Common myeloid progenitor, CD34-positive (primary cell): ENCODE measurements at regions of chr3 and their contacts with region 1.

Region 1: DNA sequence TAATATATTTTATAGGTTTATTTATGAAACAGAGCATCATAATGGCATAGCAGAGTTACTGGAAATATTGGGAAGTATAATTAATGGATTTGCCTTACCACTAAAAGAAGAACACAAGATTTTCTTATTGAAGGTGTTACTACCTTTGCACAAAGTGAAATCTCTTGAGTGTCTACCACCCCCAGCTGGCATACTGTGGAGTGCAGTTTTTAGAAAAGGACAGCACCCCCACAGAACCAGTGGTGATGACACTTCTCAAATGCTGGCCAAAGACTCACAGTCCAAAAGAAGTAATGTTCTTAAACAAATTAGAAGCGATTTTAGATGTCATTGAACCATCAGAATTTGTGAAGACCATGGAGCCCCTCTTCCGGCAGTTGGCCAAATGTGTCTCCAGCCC is 58.1 kb downstream of the DNAH1 start:
- DNase-seq: peak; percentile 11 to 22 (median 21)
- H3K4me3 ChIP-seq: no peak overlapping the region
- H3K27ac ChIP-seq: no peak overlapping the region
- H3K4me1 ChIP-seq: peaks cover 7 to 14% (median 10%) of the 10 kb centered on the region in 4 experiments
- H3K27me3 ChIP-seq: no peaks in the 10 kb centered on the region

Region 2: DNA sequence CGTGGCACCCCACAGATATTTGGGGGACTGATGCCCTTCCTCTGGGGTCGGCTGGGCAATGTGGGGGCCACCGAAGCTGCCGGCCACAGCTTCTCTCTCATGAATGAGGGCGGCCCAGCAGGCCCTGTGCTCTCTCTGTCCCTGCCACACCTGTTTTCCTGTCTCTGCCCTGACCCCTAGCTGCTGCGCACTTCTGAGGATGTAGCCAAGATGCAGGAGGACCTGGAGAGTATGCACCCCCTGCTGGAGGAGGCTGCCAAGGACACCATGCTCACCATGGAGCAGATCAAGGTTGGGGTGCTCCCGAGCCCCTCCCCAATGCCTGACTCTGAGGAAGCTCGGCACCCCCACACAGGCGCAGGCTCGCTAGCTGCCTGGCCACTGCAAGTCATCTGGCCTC is 11.0 kb after region 1 on chr3:
- CTCF ChIA-PET with region 1: interaction called, 23 read pairs
- POLR2A ChIA-PET with region 1: no interaction called
- DNase-seq: peak; percentile 33 to 50 (median 41)
- H3K4me3 ChIP-seq: no peak overlapping the region
- H3K27ac ChIP-seq: no peak overlapping the region
- H3K4me1 ChIP-seq: peaks cover 0 to 15% (median 0%) of the 10 kb centered on the region in 4 experiments
- H3K27me3 ChIP-seq: no peaks in the 10 kb centered on the region